ENCODE measurements at regions of chrX and their contacts with region 1.

Region 1: GRCh38 chrX:45849253-45849862 is 648.7 kb upstream of the DIPK2B start:
- DNase-seq: peak; percentile 42
- H3K4me3 Mint-ChIP-seq: peak overlapping the region; percentile 97
- H3K27ac Mint-ChIP-seq: peak overlapping the region; percentile 95
- H3K4me1 Mint-ChIP-seq: peaks cover 37% of the 10 kb centered on the region
- H3K27me3 Mint-ChIP-seq: no peaks in the 10 kb centered on the region

Region 2: GRCh38 chrX:45322382-45322781 is 527.0 kb before region 1 on chrX:
- CTCF ChIA-PET with region 1: no interaction called
- intact Hi-C with region 1: loop called (anchors 5 kb)
- DNase-seq: peak; percentile 18
- H3K4me3 Mint-ChIP-seq: no peak overlapping the region
- H3K27ac Mint-ChIP-seq: no peak overlapping the region
- H3K4me1 Mint-ChIP-seq: no peaks in the 10 kb centered on the region
- H3K27me3 Mint-ChIP-seq: peaks cover 2% of the 10 kb centered on the region

Region 3: DNA sequence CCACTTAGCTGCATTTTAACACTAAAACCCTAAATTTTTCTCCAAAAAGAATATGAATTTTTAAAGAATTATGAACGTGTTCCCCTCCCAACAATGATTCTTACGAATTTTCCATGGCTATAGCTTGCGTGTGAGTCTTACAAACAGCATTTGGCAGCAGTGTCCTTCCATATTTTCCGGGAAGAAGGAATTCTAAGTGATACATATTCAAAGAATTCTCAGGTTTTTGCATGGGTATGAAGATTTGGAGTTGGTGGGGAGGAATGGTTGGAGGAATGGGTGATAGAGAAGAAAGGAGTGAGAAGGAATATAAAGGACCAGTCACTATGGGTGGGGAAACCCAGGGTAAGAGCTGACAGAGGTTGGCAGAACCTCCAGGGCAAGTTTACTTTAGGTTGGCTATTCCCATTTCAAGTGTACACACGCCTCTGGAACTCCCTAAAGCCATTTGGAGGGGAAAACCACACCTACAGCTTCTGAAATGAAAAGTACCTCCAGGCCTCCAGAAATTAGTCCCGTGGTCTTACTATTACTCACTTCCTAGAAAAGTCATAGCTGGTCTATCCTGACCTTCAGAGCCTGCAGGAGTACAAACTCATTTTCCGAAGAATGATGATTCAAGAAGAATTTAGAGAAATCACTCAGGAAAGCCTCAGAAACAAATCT is 227.8 kb before region 1 on chrX:
- CTCF ChIA-PET with region 1: no interaction called
- intact Hi-C with region 1: loop called (anchors 5 kb)
- DNase-seq: peak; percentile 42
- H3K4me3 Mint-ChIP-seq: no peak overlapping the region
- H3K27ac Mint-ChIP-seq: peak overlapping the region; percentile 36
- H3K4me1 Mint-ChIP-seq: peaks cover 21% of the 10 kb centered on the region
- H3K27me3 Mint-ChIP-seq: peaks cover 6% of the 10 kb centered on the region

Region 4: GRCh38 chrX:45758319-45758718 is 91.0 kb before region 1 on chrX:
- CTCF ChIA-PET with region 1: no interaction called
- intact Hi-C with region 1: loop called (anchors 2 kb)
- DNase-seq: peak; percentile 70
- H3K4me3 Mint-ChIP-seq: peak overlapping the region; percentile 62
- H3K27ac Mint-ChIP-seq: peak overlapping the region; percentile 86
- H3K4me1 Mint-ChIP-seq: peaks cover 71% of the 10 kb centered on the region
- H3K27me3 Mint-ChIP-seq: no peaks in the 10 kb centered on the region

Region 5: DNA sequence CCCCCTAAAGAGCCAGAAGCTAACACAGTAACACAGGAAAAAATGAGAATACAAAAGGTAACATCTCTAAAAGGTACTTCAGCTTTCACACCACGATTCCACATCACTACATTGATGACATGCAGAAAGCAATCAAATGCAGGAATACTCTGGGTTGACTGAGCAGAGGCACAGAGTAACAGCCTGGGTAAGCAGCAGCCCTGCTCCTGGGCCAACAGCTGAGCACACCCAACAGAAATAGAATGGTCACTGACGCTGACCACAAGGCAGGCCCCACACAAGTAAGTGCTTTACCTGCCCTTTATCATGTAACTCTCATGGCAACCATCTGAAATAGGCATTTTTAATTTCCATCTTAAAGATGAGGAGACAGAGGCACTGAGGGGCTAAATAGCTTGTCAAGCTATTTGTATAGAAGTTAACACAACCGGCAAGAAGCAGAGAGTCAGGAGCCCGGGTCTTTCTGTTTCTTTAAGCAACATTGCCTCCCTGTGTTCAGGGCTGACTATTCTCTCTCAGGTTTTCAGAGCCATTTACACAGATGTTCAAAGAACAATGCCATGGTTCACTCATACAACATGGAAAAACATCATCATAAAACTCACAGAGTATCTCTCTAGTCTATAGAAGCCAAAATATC is 527.0 kb after region 1 on chrX:
- CTCF ChIA-PET with region 1: interaction called, 6 read pairs
- intact Hi-C with region 1: loop called (anchors 1 kb)
- DNase-seq: peak; percentile 56
- H3K4me3 Mint-ChIP-seq: no peak overlapping the region
- H3K27ac Mint-ChIP-seq: no peak overlapping the region
- H3K4me1 Mint-ChIP-seq: peaks cover 20% of the 10 kb centered on the region
- H3K27me3 Mint-ChIP-seq: no peaks in the 10 kb centered on the region